A549 (cell line): ENCODE measurements at regions of chr17 and their contacts with region 1.

Region 1: DNA sequence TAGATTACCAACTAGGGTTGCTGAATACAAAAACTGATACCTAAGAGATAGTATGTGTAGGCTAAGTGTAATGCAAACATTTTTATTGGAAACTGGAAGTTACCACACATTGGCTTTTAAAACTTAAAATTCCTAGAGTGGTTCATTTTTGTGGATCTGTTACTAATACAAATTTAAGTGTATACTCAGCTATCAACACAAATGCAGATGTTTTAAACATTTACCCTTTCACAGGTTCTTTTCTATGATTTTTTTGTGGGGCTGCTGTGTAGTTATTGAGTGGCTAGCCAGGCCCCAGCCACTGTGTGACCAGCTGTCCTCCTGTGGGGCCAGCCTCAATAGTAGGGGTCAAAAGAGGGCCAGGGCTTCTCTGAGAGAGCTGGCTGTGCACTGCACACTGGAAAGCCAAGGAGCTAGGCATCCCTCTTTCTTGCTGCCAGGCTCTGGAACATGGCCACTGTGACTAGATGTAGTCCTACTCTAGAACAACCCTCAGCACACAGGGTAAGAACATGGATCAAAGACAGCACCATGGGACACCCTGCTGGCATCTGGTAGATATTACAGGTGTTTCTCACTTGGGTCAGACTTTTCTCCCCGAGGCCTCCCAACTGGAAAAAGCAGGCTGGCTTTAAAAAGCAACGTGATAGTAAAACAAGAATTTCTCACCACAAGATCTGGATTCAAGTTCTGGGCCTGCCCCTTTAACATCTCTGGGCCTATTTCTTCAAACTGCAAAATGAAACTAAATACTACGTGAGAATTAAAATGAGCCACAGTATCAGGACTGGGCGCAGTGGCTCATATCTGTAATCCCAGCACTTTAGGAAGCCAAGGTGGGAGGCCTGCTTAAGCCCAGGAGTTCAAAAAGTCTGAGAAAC is 7.3 kb upstream of the VEZF1 start:
- DNase-seq: peak; percentile 87 to 95
- ATAC-seq: peak; percentile 84 to 88
- H3K4me3 ChIP-seq: no peak overlapping the region
- H3K27ac ChIP-seq: peak overlapping the region; percentile 50 to 76
- H3K4me1 ChIP-seq: peaks cover 63% of the 10 kb centered on the region
- CTCF ChIP-seq: peak; percentile 90
- EP300 ChIP-seq: no peak
- POLR2A ChIP-seq: no peak
- RAD21 ChIP-seq: peak; percentile 93 to 94

Region 2: GRCh38 chr17:57875309-57876115 is 119.8 kb before region 1 on chr17:
- CTCF ChIA-PET with region 1: interaction called, 1,377 read pairs
- POLR2A ChIA-PET with region 1: interaction called, 16 read pairs
- DNase-seq: peak; percentile 96 to 98
- ATAC-seq: peak; percentile 83 to 88
- H3K4me3 ChIP-seq: peak overlapping the region; percentile 7; the same call in 1 of the 3 replicates
- H3K27ac ChIP-seq: peak overlapping the region; percentile 92 to 95
- H3K4me1 ChIP-seq: peaks cover 95% of the 10 kb centered on the region
- CTCF ChIP-seq: peak; percentile 54; the same call in 2 of the 3 replicates
- EP300 ChIP-seq: peak; percentile 73 to 92; a peak in 3 of 5 replicates
- POLR2A ChIP-seq: no peak
- RAD21 ChIP-seq: peak; percentile 72 to 86

Region 3: DNA sequence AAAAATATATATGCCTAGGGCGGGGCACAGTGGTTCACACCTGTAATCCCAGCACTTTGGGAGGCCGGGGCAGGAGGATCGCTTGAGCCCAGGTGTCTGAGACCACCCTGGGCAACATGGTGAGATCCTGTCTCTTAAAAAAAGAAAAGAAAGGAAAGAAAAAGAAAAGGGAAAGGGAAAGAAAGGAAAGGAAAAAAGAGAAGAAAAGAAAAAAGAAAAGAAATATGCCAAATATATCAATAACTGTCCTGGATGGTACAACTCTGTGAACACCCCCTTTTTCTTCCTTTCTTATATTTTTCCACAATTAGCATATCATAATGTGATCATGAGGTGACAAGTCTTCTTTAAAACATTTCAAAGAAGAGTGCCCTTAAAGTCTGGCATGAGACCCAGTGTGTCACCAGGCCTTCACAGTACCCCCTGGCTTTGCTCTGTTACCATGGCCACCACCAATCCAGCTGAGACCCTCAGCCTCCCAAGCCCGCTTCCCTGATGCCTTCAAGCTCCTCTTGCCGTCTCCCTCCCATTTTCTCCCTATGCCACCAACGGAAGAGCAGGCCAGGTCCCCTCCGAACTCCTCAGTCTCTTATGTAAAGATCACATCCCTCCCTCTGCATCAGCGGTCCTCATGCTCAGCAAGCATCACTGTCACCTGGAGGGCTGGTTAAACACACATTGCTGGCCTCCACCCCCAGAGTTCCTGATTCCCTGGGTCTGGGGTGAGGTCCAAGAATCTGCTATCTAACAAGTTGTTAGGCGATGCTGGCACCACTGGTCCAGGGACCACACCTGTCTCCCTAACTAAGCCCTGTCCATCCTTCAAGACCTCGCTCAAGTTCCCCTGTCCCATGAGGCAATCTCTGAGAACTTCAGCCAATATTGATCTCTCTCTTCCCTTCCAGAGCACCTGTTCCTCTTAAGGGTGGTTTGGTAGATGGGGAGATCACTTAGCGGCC is 84.6 kb before region 1 on chr17:
- CTCF ChIA-PET with region 1: interaction called, 10 read pairs
- POLR2A ChIA-PET with region 1: no interaction called
- DNase-seq: no peak
- ATAC-seq: no peak
- H3K4me3 ChIP-seq: no peak overlapping the region
- H3K27ac ChIP-seq: peak overlapping the region in 1 of 2 experiments; percentile 74; a peak in 2 of 6 replicates
- H3K4me1 ChIP-seq: peaks cover 61% of the 10 kb centered on the region
- CTCF ChIP-seq: no peak
- EP300 ChIP-seq: no peak
- POLR2A ChIP-seq: no peak
- RAD21 ChIP-seq: no peak

Region 4: GRCh38 chr17:57970706-57971105 is 24.6 kb before region 1 on chr17:
- CTCF ChIA-PET with region 1: interaction called, 31 read pairs
- POLR2A ChIA-PET with region 1: interaction called, 3 read pairs
- DNase-seq: no peak
- ATAC-seq: peak in 1 of 2 experiments; percentile 9; a peak in 1 of 6 replicates
- H3K4me3 ChIP-seq: no peak overlapping the region
- H3K27ac ChIP-seq: peak overlapping the region in 1 of 2 experiments; percentile 50; a peak in 4 of 6 replicates
- H3K4me1 ChIP-seq: peaks cover 36% of the 10 kb centered on the region
- CTCF ChIP-seq: no peak
- EP300 ChIP-seq: no peak
- POLR2A ChIP-seq: no peak
- RAD21 ChIP-seq: no peak

Region 5: DNA sequence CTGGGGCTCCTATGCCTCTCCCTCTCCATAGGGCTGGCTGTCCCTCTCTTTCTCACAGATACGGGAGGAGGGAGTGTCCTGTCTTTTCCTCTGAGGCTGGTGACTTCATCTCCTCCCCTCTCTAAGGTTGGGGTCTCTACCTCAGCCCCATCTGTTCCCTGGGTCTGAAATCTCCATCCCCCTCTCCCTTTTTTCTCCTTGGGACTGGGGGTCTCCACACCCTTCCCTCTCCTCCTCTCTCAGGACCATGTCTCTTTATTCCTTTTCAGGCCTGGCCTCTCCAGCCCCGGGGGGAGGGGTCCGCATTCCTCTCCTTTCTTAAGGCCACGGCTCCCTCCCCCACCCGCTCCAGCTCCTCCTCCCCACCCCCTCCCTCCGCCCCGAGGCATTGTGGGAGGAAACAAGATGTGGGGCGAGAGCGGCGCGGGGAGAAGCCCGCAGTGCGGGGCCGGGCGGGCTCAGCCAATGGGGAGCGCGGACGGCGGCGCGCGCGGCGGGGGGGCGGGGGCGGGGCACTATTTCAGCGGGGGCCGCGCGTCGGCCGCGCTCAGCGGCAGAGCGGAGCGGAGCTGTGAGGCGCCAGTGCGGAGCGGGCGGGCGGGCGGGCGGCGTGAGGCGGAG is 87.7 kb after region 1 on chr17 and contains the start of gene DYNLL2:
- CTCF ChIA-PET with region 1: interaction called, 13 read pairs
- POLR2A ChIA-PET with region 1: interaction called, 12 read pairs
- DNase-seq: peak; percentile 91 to 97
- ATAC-seq: peak; percentile 82 to 87
- H3K4me3 ChIP-seq: peak within 1 kb of the TSS; percentile 95
- H3K27ac ChIP-seq: peak within 1 kb of the TSS; percentile 88 to 90
- H3K4me1 ChIP-seq: peaks cover 18% of the 10 kb centered on the region
- CTCF ChIP-seq: no peak
- EP300 ChIP-seq: peak in 1 of 2 experiments; percentile 12; a peak in 1 of 5 replicates
- POLR2A ChIP-seq: peak; percentile 60
- RAD21 ChIP-seq: no peak
- polyA plus RNA-seq, gene DYNLL2: 19.6 TPM in 2 replicates

Region 6: DNA sequence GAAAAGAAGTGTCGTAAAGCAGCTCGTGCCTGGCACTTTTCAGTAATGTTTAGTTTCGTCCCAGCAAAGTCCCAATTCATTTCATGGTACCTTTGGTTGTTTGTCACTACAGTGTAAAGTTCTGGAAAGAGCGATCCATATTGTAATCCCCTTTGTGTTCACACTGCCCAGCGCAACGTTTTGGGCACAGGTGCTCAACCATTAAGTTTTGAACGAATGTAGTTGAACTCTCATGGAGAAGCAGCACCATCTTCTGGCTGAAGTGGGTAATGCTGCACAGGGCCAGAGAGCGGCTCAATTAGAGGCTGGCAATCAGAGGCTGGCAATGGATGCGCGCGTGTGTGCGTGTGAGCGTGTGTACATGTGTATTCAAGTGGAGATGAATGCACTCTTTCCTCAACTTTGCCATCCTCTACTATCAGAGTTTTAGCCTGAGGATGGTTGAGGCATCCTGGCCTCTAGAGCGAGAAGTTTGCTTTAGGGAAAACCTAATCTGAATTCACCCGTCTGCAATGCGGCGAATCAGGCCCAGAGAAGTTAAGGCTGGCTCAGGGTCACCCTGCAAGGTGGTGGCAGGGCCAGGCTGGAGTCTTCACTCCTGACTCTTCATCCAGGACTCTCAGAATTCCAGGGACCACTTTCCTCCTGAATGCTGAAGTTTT is 117.8 kb after region 1 on chr17:
- CTCF ChIA-PET with region 1: interaction called, 34 read pairs
- POLR2A ChIA-PET with region 1: no interaction called
- DNase-seq: peak; percentile 78 to 79
- ATAC-seq: peak; percentile 80 to 87
- H3K4me3 ChIP-seq: no peak overlapping the region
- H3K27ac ChIP-seq: no peak overlapping the region
- H3K4me1 ChIP-seq: no peaks in the 10 kb centered on the region
- CTCF ChIP-seq: peak; percentile 96
- EP300 ChIP-seq: no peak
- POLR2A ChIP-seq: no peak
- RAD21 ChIP-seq: peak; percentile 98 to 99